ENCODE measurements at regions of chr14 and their contacts with region 1.

Region 1: GRCh38 chr14:72253486-72253885 is 321.3 kb downstream of the RGS6 start:
- DNase-seq: no peak
- H3K4me3 ChIP-seq: no peak overlapping the region
- H3K27ac ChIP-seq: no peak overlapping the region
- H3K4me1 ChIP-seq: no peaks in the 10 kb centered on the region
- H3K27me3 ChIP-seq: no peaks in the 10 kb centered on the region
- CTCF ChIP-seq: no peak
- POLR2A ChIP-seq: no peak

Region 2: GRCh38 chr14:72129266-72129665 is 124.2 kb before region 1 on chr14:
- intact Hi-C with region 1: no loop called
- DNase-seq: peak; percentile 32 to 60
- H3K4me3 ChIP-seq: no peak overlapping the region
- H3K27ac ChIP-seq: peak overlapping the region in 1 of 2 donors; percentile 0
- H3K4me1 ChIP-seq: no peaks in the 10 kb centered on the region
- H3K27me3 ChIP-seq: no peaks in the 10 kb centered on the region
- CTCF ChIP-seq: no peak
- POLR2A ChIP-seq: no peak

Region 3: GRCh38 chr14:72217146-72217545 is 36.3 kb before region 1 on chr14:
- intact Hi-C with region 1: loop called (anchors 2 kb)
- DNase-seq: no peak
- H3K4me3 ChIP-seq: no peak overlapping the region
- H3K27ac ChIP-seq: no peak overlapping the region
- H3K4me1 ChIP-seq: no peaks in the 10 kb centered on the region
- H3K27me3 ChIP-seq: no peaks in the 10 kb centered on the region
- CTCF ChIP-seq: no peak
- POLR2A ChIP-seq: no peak

Region 4: DNA sequence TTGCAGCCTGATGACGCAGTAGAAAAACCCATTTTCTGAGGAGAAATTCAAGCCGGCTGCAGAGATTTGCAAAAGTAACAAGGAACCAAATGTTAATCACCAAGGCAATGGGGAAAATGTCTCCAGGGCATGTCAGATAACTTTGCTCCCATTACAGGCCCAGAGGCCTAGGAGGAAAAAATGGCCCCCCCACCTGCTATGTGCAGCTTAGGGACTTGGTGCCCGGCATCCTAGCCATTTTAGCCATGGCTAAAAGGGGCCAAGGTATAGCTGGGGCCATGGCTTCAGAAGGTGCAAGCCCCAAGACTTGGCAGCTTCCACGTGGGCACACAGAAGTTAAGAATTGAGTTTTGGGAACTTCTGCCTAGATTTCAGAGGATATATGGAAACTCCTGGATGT is 30.7 kb after region 1 on chr14:
- intact Hi-C with region 1: no loop called
- DNase-seq: no peak
- H3K4me3 ChIP-seq: no peak overlapping the region
- H3K27ac ChIP-seq: no peak overlapping the region
- H3K4me1 ChIP-seq: no peaks in the 10 kb centered on the region
- H3K27me3 ChIP-seq: no peaks in the 10 kb centered on the region
- CTCF ChIP-seq: no peak
- POLR2A ChIP-seq: no peak